Adrenal gland (tissue), 19 donors: ENCODE measurements at regions of chr17 and their contacts with region 1.

Region 1: GRCh38 chr17:50626037-50626574 is 8.6 kb upstream of the ABCC3 start:
- DNase-seq: peak; percentile 73 to 89 (median 85)
- H3K4me3 ChIP-seq: no peak overlapping the region
- H3K27ac ChIP-seq: no peak overlapping the region
- H3K4me1 ChIP-seq: no peaks in the 10 kb centered on the region
- H3K27me3 ChIP-seq: no peaks in the 10 kb centered on the region
- CTCF ChIP-seq: peak; percentile 66 to 84 (median 76)
- POLR2A ChIP-seq: no peak

Region 2: GRCh38 chr17:50297407-50297865 is 328.7 kb before region 1 on chr17:
- intact Hi-C with region 1: no loop called
- DNase-seq: peak; percentile 71 to 86 (median 83)
- H3K4me3 ChIP-seq: no peak overlapping the region
- H3K27ac ChIP-seq: no peak overlapping the region
- H3K4me1 ChIP-seq: no peaks in the 10 kb centered on the region
- H3K27me3 ChIP-seq: no peaks in the 10 kb centered on the region
- CTCF ChIP-seq: peak; percentile 74 to 98 (median 94)
- POLR2A ChIP-seq: no peak

Region 3: DNA sequence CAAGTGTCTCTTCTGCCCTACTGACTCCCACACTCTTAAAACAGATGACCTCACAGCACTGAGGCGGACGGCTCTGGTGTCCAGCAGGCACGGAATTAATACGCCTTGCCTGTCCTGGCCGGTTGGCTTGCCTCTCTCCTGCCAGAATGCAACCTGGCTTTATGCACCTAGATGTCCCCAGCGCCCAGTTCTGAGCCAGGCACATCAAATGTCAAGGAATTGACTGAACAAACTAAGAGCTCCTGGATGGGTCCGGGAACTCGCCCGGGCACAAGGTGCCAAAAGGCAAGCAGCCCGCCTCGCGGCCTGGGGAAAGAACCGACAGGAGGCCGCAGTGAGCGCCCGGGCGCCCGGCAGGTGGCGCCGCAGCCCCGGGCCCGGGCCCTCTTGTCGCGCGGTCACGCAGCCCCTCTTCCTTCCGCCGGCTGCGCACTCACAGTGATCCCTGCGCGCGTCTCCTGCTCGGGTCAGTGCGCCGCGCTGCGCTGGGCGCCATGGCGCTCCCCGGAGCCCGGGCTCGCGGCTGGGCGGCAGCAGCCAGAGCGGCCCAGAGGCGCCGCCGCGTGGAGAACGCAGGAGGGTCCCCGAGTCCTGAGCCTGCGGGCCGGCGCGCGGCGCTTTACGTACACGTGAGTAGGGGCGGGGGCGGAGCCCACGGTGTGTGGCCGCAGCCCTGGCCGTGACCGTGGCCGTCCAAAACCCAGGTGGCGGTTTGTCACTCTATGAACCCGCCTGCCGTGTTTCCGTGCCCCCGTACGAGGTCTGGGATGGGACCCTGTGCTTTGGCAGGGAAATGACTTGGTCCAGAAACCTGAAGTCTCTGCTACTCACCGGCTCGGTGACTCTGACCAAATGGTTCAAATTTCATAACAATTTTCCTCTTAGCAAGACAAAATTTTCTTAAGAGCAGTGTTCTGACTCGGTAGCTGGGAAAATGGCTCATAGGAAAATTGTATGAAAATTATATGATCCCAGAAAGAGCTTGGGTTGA is 147.4 kb before region 1 on chr17 and contains the start of gene RSAD1:
- intact Hi-C with region 1: loop called in 1 of 2 experiments (anchors 10 kb)
- DNase-seq: peak; percentile 85 to 92 (median 89)
- H3K4me3 ChIP-seq: peak within 1 kb of the TSS in 3 of 4 donors; percentile 47 to 92 (median 70)
- H3K27ac ChIP-seq: peak within 1 kb of the TSS; percentile 57 to 93 (median 90)
- H3K4me1 ChIP-seq: peaks cover 16 to 25% of the 10 kb centered on the region in 2 donors
- H3K27me3 ChIP-seq: no peaks in the 10 kb centered on the region
- CTCF ChIP-seq: peak in 5 of 6 experiments; percentile 42 to 92 (median 89)
- POLR2A ChIP-seq: peak; percentile 92 to 93
- total RNA-seq, gene RSAD1: 28.4 to 77.3 (median 51.7) TPM

Region 4: GRCh38 chr17:50547035-50547735 is 78.9 kb before region 1 on chr17 and contains the start of gene SPATA20:
- intact Hi-C with region 1: loop called (anchors 5 kb)
- DNase-seq: peak; percentile 91 to 97 (median 95)
- H3K4me3 ChIP-seq: peak within 1 kb of the TSS in 3 of 4 donors; percentile 23 to 82 (median 52)
- H3K27ac ChIP-seq: peak within 1 kb of the TSS; percentile 22 to 83 (median 63)
- H3K4me1 ChIP-seq: peaks cover 23 to 24% of the 10 kb centered on the region in 2 donors
- H3K27me3 ChIP-seq: no peaks in the 10 kb centered on the region
- CTCF ChIP-seq: peak; percentile 96 to 100 (median 98)
- POLR2A ChIP-seq: peak; percentile 82 to 87
- total RNA-seq, gene SPATA20: 52.1 to 205 (median 151) TPM

Region 5: DNA sequence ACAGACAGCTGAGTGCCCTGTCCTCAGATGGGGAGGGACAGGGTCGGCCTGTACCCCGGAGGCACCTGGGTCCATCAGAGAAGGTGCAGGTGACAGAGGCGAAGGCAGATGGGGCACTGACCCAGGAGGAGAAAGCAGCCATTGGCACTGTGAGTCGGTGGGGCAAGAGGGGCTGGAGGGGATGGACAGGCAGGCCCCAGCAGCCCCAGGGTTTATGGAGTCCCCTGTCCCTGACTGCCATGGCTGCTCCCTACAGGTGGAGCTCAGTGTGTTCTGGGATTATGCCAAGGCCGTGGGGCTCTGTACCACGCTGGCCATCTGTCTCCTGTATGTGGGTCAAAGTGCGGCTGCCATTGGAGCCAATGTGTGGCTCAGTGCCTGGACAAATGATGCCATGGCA is 49.5 kb after region 1 on chr17:
- intact Hi-C with region 1: loop called (anchors 5 kb)
- DNase-seq: peak in 2 of 7 donors; percentile 5 to 41
- H3K4me3 ChIP-seq: no peak overlapping the region
- H3K27ac ChIP-seq: no peak overlapping the region
- H3K4me1 ChIP-seq: peaks cover 4 to 9% of the 10 kb centered on the region in 2 donors
- H3K27me3 ChIP-seq: no peaks in the 10 kb centered on the region
- CTCF ChIP-seq: no peak
- POLR2A ChIP-seq: no peak

Region 6: DNA sequence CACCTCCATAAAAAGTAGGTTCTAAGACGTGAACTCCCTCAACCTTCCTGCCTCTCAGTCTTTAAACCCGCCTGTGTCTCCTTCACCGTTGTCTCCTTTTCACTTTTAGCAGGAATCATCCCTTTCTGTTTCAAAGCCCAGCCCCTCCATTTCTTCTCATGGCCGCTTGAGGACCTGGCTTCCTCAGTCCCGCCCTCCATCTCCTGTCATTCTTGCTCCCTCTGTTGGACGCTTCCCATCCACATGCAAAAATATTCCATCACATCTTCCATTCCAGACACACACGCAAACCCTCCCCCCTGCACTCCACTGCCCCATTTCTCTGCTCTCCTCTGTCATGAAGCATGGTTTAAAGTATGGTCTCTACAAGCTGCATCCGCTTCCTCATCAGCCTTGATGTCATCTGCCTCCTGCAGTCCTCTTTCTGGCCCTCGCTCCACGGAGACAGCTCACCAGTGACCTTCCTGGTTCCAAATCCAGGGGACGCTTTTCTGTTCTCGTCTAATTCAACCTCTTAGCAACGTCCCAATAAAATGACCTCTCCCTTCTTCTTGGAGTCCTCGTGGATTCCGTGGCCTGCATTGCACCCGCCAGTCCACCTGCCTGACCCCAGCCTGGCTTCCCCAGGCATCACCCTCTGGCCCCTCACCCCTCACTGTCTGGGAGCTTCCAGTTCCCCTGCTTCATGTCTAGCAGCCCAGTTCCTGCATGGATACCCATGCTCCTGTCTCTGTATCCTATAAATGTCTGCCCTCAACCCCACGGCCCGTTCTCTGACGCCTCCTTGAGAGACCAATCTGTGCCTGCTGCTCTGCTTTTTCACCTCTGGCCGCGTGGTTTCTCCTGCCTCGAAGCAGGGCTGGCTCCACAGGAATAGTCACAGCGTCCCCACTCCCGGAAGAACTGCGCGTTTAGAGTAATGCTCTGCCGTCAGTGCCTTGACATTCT is 55.4 kb after region 1 on chr17:
- intact Hi-C with region 1: loop called (anchors 5 kb)
- DNase-seq: peak in 6 of 7 donors; percentile 75 to 83 (median 76)
- H3K4me3 ChIP-seq: no peak overlapping the region
- H3K27ac ChIP-seq: peak overlapping the region; percentile 36 to 87 (median 76)
- H3K4me1 ChIP-seq: peaks cover 19 to 32% of the 10 kb centered on the region in 2 donors
- H3K27me3 ChIP-seq: no peaks in the 10 kb centered on the region
- CTCF ChIP-seq: peak in 5 of 6 experiments; percentile 51 to 79 (median 70)
- POLR2A ChIP-seq: peak in 1 of 2 donors; percentile 40

Region 7: GRCh38 chr17:50697663-50698274 is 71.7 kb after region 1 on chr17:
- intact Hi-C with region 1: loop called in 1 of 2 experiments (anchors 5 kb)
- DNase-seq: peak in 1 of 7 donors; percentile 35
- H3K4me3 ChIP-seq: no peak overlapping the region
- H3K27ac ChIP-seq: no peak overlapping the region
- H3K4me1 ChIP-seq: peaks cover 0 to 30% of the 10 kb centered on the region in 2 donors
- H3K27me3 ChIP-seq: no peaks in the 10 kb centered on the region
- CTCF ChIP-seq: no peak
- POLR2A ChIP-seq: no peak